ENCODE measurements at regions of chr2 and their contacts with region 1.

Region 1: DNA sequence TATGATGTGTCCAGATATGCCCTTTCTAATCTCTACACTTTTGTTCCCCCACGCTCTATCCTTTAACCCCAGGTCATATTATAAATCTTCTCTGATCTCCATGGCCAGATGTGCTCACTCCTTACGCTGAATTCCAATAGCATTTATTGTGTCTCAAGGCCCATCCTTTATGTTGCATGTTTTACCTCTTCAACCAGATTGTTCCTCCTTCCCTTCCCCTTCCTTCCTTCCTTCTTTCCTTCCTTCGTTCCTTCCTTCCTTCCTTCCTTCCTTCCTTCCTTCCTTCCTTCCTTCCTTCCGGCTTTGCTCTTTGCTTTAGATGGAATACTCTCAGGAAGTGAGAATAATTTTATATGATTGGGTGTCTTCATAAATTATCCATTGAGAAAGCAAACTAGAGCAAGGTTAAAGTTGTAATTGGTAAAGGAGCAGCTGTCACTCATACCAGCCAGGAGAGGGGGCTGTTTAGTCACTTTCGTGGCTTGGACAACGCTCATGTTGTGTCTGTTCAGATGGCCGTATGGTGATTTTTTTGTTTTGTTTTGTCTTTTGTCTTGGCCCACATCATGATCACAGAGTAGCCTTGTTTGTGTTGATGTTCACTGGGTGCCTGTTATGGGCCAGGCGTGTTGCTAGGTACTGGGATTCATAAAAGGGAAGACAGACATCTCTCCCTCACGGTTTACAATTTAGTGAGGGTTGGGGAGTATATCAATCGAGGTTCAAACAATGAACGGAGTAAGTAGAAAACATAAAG is 68.0 kb downstream of the DAW1 start:
- DNase-seq: peak in 7 of 10 donors; percentile 14 to 85 (median 56)

Region 2: GRCh38 chr2:227661019-227661649 is 278.3 kb before region 1 on chr2:
- intact Hi-C with region 1: no loop called
- DNase-seq: no peak

Region 3: DNA sequence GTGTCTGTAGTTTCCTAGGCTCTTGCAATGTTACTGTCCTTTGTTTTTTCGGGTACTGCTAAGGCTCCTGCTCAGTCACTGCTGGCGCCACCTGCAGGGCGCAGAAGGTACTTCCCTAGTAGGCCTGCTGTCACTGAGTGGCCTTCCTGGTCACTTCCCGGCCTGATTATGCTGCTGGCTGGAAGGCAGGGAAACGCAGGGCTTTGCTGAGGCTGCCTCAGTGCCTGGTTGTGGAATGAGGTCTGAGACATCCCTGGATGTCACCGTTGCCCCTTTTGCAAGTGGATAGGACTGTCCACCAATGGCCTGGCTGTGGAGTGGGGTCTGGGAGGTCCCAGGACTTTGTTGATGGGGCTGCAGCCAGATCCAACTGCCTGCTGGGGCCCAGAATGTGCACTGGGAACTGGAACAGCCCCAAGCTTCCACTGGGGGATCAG is 54.9 kb before region 1 on chr2:
- intact Hi-C with region 1: no loop called
- DNase-seq: peak in 4 of 10 donors; percentile 20 to 89 (median 40)

Region 4: GRCh38 chr2:228048838-228049490 is 109.5 kb after region 1 on chr2:
- intact Hi-C with region 1: loop called (anchors 2 kb)
- DNase-seq: peak in 2 of 10 donors; percentile 12 to 15